A673 (cell line): ENCODE measurements at regions of chrX and their contacts with region 1.

Region 1: GRCh38 chrX:133911825-133912495 is 73.4 kb downstream of the GPC3 start:
- DNase-seq: no peak
- H3K4me3 ChIP-seq: no peak overlapping the region
- H3K27ac ChIP-seq: no peak overlapping the region
- H3K4me1 ChIP-seq: no peaks in the 10 kb centered on the region
- H3K27me3 ChIP-seq: no peaks in the 10 kb centered on the region
- CTCF ChIP-seq: no peak

Region 2: GRCh38 chrX:133530960-133531359 is 381.0 kb before region 1 on chrX:
- CTCF ChIA-PET with region 1: no interaction called
- POLR2A ChIA-PET with region 1: no interaction called
- intact Hi-C with region 1: no loop called
- DNase-seq: no peak
- H3K4me3 ChIP-seq: no peak overlapping the region
- H3K27ac ChIP-seq: no peak overlapping the region
- H3K4me1 ChIP-seq: peaks cover 3% of the 10 kb centered on the region
- H3K27me3 ChIP-seq: no peaks in the 10 kb centered on the region
- CTCF ChIP-seq: no peak

Region 3: DNA sequence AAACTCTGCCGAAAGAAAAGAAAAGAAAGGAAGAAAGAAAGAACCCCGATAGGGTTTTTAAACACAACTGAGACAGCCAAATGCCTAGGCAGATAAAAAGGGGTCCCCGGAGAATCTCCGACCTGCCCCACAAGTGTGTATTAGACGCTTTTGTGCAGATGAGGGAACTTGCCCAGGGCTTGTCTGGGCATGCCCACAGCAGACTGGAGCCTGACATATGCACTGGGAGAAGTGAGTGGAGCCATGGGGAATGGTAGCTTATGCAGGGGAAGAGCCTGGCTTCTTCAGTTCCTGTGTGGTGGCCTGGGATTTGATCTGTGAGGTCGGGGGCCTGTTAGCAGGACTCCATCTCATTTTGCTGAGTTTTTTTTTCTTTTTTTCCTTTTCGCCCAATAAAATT is 125.6 kb before region 1 on chrX:
- CTCF ChIA-PET with region 1: no interaction called
- POLR2A ChIA-PET with region 1: no interaction called
- intact Hi-C with region 1: loop called (anchors 5 kb)
- DNase-seq: no peak
- H3K4me3 ChIP-seq: no peak overlapping the region
- H3K27ac ChIP-seq: no peak overlapping the region
- H3K4me1 ChIP-seq: no peaks in the 10 kb centered on the region
- H3K27me3 ChIP-seq: peaks cover 10% of the 10 kb centered on the region
- CTCF ChIP-seq: no peak

Region 4: GRCh38 chrX:133859860-133860259 is 52.1 kb before region 1 on chrX:
- CTCF ChIA-PET with region 1: no interaction called
- POLR2A ChIA-PET with region 1: no interaction called
- intact Hi-C with region 1: no loop called
- DNase-seq: no peak
- H3K4me3 ChIP-seq: no peak overlapping the region
- H3K27ac ChIP-seq: no peak overlapping the region
- H3K4me1 ChIP-seq: no peaks in the 10 kb centered on the region
- H3K27me3 ChIP-seq: no peaks in the 10 kb centered on the region
- CTCF ChIP-seq: no peak